ENCODE measurements at regions of chr16 and their contacts with region 1.

Region 1: GRCh38 chr16:55465077-55465896 is 13.7 kb upstream of the MMP2 start:
- DNase-seq: peak; percentile 90 to 96
- ATAC-seq: peak; percentile 95
- H3K4me3 ChIP-seq: no peak overlapping the region
- H3K27ac ChIP-seq: no peak overlapping the region
- H3K4me1 ChIP-seq: no peaks in the 10 kb centered on the region
- H3K27me3 ChIP-seq: no peaks in the 10 kb centered on the region

Region 2: GRCh38 chr16:55494994-55495421 is 29.7 kb after region 1 on chr16:
- intact Hi-C with region 1: loop called in 1 of 2 experiments (anchors 2 kb)
- DNase-seq: no peak
- ATAC-seq: peak; percentile 64
- H3K4me3 ChIP-seq: no peak overlapping the region
- H3K27ac ChIP-seq: no peak overlapping the region
- H3K4me1 ChIP-seq: no peaks in the 10 kb centered on the region
- H3K27me3 ChIP-seq: no peaks in the 10 kb centered on the region

Region 3: DNA sequence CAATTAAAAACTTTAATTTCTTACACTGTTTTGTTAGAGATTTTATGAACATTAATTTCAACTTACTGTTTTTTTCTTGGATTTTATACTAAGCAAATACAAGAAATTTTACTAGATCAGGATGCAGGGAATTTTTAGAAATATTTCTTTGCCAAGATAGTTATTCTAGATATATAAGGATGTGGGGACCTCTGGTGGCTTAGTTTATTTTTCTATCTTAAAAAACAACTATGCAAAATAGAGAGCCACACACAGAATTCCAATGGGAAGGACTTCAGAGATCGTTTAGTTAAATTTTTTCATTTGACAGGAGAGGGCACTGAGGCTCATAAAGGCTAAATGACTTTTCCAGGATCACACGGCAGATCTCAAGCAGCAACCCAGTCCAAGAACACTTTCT is 78.2 kb after region 1 on chr16:
- intact Hi-C with region 1: loop called (anchors 1 to 2 kb)
- DNase-seq: no peak
- ATAC-seq: peak; percentile 85
- H3K4me3 ChIP-seq: no peak overlapping the region
- H3K27ac ChIP-seq: no peak overlapping the region
- H3K4me1 ChIP-seq: no peaks in the 10 kb centered on the region
- H3K27me3 ChIP-seq: no peaks in the 10 kb centered on the region

Region 4: DNA sequence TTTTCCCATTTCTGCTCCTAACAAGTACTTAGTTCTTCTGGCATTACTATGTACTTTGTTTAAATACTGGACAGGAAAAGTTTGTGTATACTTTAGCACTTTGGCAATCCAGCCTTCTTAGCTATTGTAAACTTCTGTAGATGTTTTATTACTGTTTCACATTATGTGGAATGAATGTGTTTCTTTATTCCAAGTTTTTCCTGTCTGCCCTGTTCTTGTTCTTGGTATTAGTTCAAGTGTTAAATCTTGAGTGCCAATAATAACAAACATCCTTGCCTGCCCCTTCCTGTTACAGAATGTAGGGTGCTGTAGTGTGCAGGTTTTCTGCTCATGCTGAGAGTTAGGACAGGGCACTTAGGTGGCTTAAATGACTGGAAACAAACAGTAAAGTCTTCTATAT is 93.9 kb after region 1 on chr16:
- intact Hi-C with region 1: no loop called
- DNase-seq: no peak
- ATAC-seq: peak; percentile 48
- H3K4me3 ChIP-seq: no peak overlapping the region
- H3K27ac ChIP-seq: no peak overlapping the region
- H3K4me1 ChIP-seq: peaks cover 0 to 2% of the 10 kb centered on the region in 2 donors
- H3K27me3 ChIP-seq: no peaks in the 10 kb centered on the region

Region 5: DNA sequence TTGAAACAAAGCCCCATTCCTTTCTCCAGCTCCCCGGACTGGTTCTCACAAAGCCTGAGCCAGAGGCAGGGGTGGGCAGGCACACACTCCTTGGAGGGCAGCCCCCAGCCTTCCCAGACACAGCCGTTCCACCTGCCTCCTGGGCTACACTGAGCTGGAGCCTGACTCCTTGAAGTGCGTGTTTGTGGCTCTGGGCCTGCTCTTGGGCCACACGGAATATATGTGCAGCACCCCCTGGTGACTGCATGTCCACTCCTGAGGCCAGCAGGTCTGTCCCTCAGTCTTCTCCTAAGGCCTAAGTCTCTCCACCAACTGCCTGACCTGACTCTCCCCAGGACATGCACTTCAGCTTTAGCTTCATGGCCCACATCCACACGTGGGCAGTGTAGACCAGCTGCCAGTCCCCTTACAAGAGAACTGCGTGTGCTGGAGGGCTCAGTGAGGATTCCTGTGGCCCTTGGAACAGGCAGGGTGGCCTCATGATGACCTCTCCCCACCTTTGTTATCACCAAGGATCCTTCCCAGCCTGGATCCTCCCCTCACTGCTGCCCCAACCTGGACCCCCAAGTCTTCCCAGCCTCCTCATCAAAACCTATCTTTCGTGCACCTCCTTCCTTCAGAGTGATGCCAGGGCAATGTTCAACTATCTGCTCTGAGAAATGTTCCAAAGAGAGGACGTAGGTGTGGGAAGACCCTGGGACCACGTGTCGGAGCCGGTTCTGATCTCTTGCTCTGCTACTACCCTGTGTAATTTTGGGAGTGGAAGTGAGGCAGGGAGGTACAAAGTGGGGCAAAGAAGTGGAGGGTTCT is 178.1 kb after region 1 on chr16:
- intact Hi-C with region 1: loop called in 1 of 2 experiments (anchors 5 kb)
- DNase-seq: no peak
- ATAC-seq: no peak
- H3K4me3 ChIP-seq: no peak overlapping the region
- H3K27ac ChIP-seq: no peak overlapping the region
- H3K4me1 ChIP-seq: no peaks in the 10 kb centered on the region
- H3K27me3 ChIP-seq: no peaks in the 10 kb centered on the region

Region 6: GRCh38 chr16:55701442-55702319 is 236.4 kb after region 1 on chr16:
- intact Hi-C with region 1: loop called (anchors 1 to 5 kb)
- DNase-seq: peak; percentile 70 to 81
- ATAC-seq: peak; percentile 50
- H3K4me3 ChIP-seq: no peak overlapping the region
- H3K27ac ChIP-seq: no peak overlapping the region
- H3K4me1 ChIP-seq: no peaks in the 10 kb centered on the region
- H3K27me3 ChIP-seq: no peaks in the 10 kb centered on the region

Region 7: DNA sequence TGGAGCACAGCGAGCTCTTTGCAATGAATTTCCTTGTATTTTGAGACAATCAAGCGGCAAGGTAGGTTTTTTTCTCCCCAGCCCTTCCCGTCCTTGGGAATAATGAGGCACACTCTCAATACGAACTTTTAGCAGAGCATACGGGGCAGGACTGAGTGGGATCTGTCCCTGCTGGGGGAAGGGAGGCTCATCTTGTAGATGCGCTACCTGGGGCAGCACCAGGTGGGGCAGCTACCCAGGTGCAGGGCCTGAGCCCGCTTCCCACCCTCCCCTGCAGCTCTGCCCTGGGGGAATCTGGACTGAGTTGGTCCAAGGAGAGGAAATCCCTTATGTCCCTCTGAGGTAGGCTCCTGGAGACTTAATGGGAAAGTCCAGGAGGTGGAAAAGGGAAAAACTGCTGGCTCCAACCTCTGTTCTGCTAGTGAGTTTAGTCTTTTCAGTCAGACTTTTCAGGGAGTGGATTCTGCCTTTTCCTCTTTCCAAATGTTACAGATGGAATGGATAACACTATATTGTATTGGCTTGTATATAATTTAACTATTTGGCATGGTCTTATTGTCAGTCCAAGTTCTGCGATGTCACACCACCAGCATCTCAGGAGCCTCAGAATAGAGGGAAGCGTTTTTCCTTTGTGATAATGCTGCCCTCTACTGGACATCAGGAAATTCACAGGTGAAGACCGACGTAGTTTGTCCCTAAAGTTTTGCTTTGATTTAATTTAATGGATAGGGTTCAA is 377.2 kb after region 1 on chr16:
- intact Hi-C with region 1: loop called in 1 of 2 experiments (anchors 5 kb)
- DNase-seq: no peak
- ATAC-seq: peak; percentile 63
- H3K4me3 ChIP-seq: no peak overlapping the region
- H3K27ac ChIP-seq: no peak overlapping the region
- H3K4me1 ChIP-seq: no peaks in the 10 kb centered on the region
- H3K27me3 ChIP-seq: peaks cover 0 to 2% of the 10 kb centered on the region in 2 donors

Region 8: DNA sequence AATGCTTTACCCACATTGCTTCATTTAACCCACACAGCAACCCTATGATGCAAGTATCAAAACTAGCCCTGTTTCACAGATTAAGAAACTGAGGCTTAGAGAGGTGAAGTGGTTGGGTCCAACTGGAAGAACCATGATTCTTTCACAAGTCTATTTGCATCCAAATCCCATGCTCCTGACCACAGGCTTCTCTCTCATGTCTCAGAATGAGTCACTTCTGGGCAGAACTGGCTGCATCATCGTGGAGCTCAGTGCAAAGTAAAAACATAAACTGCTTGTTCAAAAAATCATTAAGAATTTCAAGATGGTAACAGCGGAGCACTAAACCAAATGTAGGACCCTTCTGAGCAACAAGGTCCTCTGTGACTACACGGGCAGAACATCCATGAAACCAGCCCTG is 387.8 kb after region 1 on chr16:
- intact Hi-C with region 1: loop called in 1 of 2 experiments (anchors 5 kb)
- DNase-seq: no peak
- ATAC-seq: no peak
- H3K4me3 ChIP-seq: no peak overlapping the region
- H3K27ac ChIP-seq: no peak overlapping the region
- H3K4me1 ChIP-seq: no peaks in the 10 kb centered on the region
- H3K27me3 ChIP-seq: no peaks in the 10 kb centered on the region

Measured in aorta (tissue), 5 donors.